ENCODE measurements at regions of chr21 and their contacts with region 1.

Region 1: GRCh38 chr21:36060159-36060921 is at the start of gene SETD4:
- DNase-seq: peak; percentile 96 to 100 (median 99)
- ATAC-seq: peak; percentile 95
- H3K4me3 ChIP-seq: peak within 1 kb of the TSS; percentile 73
- H3K27ac ChIP-seq: peak within 1 kb of the TSS; percentile 86
- H3K4me1 ChIP-seq: peaks cover 16 to 18% of the 10 kb centered on the region in 2 experiments; a peak in 4 of 5 replicates
- H3K27me3 ChIP-seq: no peaks in the 10 kb centered on the region
- CTCF ChIP-seq: no peak
- EP300 ChIP-seq: no peak
- POLR2A ChIP-seq: peak; percentile 94
- RAD21 ChIP-seq: peak in 1 of 2 experiments; percentile 2; a peak in 1 of 4 replicates
- polyA plus RNA-seq, gene SETD4: 49.2 to 51.3 TPM

Region 2: GRCh38 chr21:35814858-35815619 is 245.3 kb before region 1 on chr21:
- CTCF ChIA-PET with region 1: no interaction called
- POLR2A ChIA-PET with region 1: no interaction called
- in situ Hi-C with region 1: no loop called
- intact Hi-C with region 1: no loop called
- DNase-seq: no peak
- ATAC-seq: no peak
- H3K4me3 ChIP-seq: no peak overlapping the region
- H3K27ac ChIP-seq: no peak overlapping the region
- H3K4me1 ChIP-seq: no peaks in the 10 kb centered on the region
- H3K27me3 ChIP-seq: peaks cover 12 to 14% of the 10 kb centered on the region in 2 experiments; a peak in 4 of 5 replicates
- CTCF ChIP-seq: no peak
- EP300 ChIP-seq: no peak
- POLR2A ChIP-seq: no peak
- RAD21 ChIP-seq: no peak

Region 3: GRCh38 chr21:36076878-36077655 is 16.7 kb after region 1 on chr21:
- CTCF ChIA-PET with region 1: no interaction called
- POLR2A ChIA-PET with region 1: interaction called, 12 read pairs
- in situ Hi-C with region 1: no loop called
- intact Hi-C with region 1: no loop called
- DNase-seq: peak in 3 of 4 experiments; percentile 38 to 56 (median 52)
- ATAC-seq: peak; percentile 52
- H3K4me3 ChIP-seq: no peak overlapping the region
- H3K27ac ChIP-seq: no peak overlapping the region; the same call in 2 of the 3 replicates
- H3K4me1 ChIP-seq: peaks cover 5 to 36% of the 10 kb centered on the region in 2 experiments; a peak in 4 of 5 replicates
- H3K27me3 ChIP-seq: no peaks in the 10 kb centered on the region
- CTCF ChIP-seq: no peak
- EP300 ChIP-seq: peak; percentile 38; the same call in 1 of the 2 replicates
- POLR2A ChIP-seq: no peak
- RAD21 ChIP-seq: no peak

Region 4: GRCh38 chr21:36113647-36114428 is 53.5 kb after region 1 on chr21:
- CTCF ChIA-PET with region 1: no interaction called
- POLR2A ChIA-PET with region 1: no interaction called
- in situ Hi-C with region 1: no loop called
- intact Hi-C with region 1: loop called (anchors 5 kb)
- DNase-seq: no peak
- ATAC-seq: no peak
- H3K4me3 ChIP-seq: no peak overlapping the region
- H3K27ac ChIP-seq: no peak overlapping the region
- H3K4me1 ChIP-seq: peaks cover 0 to 6% of the 10 kb centered on the region in 2 experiments; a peak in 1 of 5 replicates
- H3K27me3 ChIP-seq: peaks cover 0 to 3% of the 10 kb centered on the region in 2 experiments; a peak in 1 of 5 replicates
- CTCF ChIP-seq: no peak
- EP300 ChIP-seq: no peak
- POLR2A ChIP-seq: no peak
- RAD21 ChIP-seq: no peak

Region 5: DNA sequence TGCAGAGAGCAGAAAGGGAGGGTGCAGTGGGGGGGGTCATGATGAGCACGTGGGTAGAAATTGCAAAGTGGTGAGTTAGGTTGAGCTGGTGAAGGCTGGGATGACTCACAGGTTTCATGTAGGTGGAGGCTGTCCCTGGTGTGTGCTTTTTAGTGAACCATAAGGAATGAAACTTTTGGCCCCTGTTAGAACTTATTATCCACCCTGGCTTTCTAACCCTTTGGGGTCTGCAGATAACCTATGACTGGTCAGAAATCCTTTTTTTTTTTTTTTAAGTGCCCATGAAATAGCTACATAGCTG is 143.2 kb after region 1 on chr21:
- CTCF ChIA-PET with region 1: no interaction called
- POLR2A ChIA-PET with region 1: no interaction called
- in situ Hi-C with region 1: no loop called
- intact Hi-C with region 1: no loop called
- DNase-seq: peak in 1 of 4 experiments; percentile 24
- ATAC-seq: peak; percentile 57; the same call in 1 of the 3 replicates
- H3K4me3 ChIP-seq: no peak overlapping the region
- H3K27ac ChIP-seq: no peak overlapping the region
- H3K4me1 ChIP-seq: peaks cover 0 to 3% of the 10 kb centered on the region in 2 experiments; a peak in 1 of 5 replicates
- H3K27me3 ChIP-seq: peaks cover 38 to 71% of the 10 kb centered on the region in 2 experiments
- CTCF ChIP-seq: no peak
- EP300 ChIP-seq: no peak
- POLR2A ChIP-seq: no peak
- RAD21 ChIP-seq: no peak

Measured in K562 (cell line).